Activated CD8-positive, alpha-beta memory T cell treated with anti-CD3 and anti-CD28 coated beads, Interleukin-2, amount 10 ng/mL, durations not matched to agents 7 days and 5 days (primary cell): ENCODE measurements at regions of chr4 and their contacts with region 1.

Region 1: DNA sequence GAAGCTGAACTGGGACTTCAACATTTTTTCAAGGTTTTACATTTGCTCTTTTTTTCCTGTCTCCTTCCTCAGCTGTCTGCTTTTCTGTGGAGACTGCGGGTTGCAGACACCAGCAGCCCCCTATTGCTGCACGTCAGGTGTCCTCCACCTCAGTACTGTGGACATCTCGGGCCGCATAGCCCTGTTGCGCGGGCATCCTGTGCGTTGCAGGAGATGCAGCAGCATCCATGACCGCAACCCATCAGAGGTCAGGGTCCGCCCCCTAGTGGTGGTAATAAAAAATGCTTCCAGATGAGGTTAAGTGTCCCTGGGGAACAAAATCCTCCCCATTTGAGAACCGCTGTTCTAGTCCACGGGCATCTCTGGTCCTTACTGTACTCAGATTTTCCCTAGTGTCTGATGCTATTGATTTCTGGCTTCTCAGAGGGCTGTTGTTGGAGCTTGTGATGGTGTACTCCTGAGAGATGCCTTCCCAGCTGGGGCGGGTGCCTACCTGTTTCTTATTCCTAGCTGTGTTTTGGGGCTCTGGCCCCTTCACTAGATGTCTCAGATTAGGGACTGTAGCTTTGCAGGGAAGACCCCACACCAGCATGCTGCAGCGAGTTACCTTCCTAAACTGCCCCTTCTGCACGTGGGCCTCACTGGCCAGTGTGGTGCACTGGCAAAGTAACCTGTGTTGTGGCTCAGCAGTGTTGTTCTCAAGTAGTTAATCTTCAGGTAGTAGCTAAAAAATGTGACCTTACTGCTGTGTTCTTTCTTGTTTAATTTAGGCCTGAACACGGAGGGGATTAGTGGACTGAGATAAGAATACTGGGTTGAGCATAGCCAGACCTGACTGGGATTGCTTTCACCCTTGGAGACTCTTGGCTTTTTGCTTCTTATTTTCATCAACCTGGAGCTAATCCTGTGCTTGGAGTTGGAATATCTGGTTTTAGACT is 28.2 kb downstream of the NSD2 start:
- DNase-seq: peak; percentile 86
- ATAC-seq: peak; percentile 92
- H3K4me3 Mint-ChIP-seq: no peak overlapping the region
- H3K27ac Mint-ChIP-seq: peak overlapping the region; percentile 80
- H3K4me1 Mint-ChIP-seq: peaks cover 70% of the 10 kb centered on the region
- H3K27me3 Mint-ChIP-seq: no peaks in the 10 kb centered on the region

Region 2: DNA sequence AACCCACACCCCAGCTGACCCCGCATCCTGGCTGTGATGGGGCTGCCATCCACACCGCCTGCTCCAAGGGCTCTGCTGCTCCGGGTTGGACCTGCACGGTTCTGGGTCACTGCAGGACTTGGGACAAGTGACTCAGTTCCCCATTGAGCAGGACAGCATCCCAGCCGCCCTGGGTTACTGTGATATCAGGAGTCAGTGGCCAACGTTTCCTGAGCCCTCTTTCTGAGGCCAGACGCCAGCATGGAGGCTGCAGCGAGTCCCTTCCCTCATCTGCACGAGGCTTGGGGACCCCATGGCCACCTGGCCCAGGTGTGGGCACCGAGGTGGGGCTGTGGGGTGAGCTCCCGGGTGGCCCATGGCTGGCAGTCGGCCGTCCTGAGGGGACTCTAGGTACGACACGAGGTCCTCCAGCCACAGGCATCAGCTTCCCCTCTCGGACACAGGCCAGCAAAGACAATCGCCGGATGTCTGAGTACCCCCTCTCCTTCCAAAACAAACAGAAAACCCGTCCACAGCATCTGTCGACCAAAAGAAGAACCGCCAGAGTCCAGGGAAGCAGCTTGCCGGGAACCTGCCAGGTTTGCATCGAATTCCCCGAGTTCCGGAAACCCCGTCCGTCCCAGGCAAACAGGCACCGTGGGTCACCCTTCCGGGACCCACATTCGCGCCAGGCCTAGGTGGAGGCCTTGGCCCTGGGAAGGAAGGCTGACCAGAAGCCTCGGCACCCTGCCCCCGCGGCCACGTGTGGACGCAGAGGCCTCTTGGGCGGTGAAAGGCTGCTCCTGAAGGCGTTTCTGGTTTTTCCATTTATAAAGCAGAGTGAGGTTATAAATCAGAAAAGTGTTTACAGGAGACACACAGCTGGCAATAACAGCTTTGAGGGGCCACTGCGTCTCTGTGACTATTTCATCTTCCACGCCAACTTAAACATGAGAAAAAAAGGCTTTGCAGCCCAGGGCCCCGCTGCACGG is 351.3 kb before region 1 on chr4:
- CTCF ChIA-PET with region 1: no interaction called
- DNase-seq: no peak
- ATAC-seq: no peak
- H3K4me3 Mint-ChIP-seq: no peak overlapping the region
- H3K27ac Mint-ChIP-seq: no peak overlapping the region
- H3K4me1 Mint-ChIP-seq: peaks cover 3% of the 10 kb centered on the region
- H3K27me3 Mint-ChIP-seq: peaks cover 8% of the 10 kb centered on the region

Region 3: DNA sequence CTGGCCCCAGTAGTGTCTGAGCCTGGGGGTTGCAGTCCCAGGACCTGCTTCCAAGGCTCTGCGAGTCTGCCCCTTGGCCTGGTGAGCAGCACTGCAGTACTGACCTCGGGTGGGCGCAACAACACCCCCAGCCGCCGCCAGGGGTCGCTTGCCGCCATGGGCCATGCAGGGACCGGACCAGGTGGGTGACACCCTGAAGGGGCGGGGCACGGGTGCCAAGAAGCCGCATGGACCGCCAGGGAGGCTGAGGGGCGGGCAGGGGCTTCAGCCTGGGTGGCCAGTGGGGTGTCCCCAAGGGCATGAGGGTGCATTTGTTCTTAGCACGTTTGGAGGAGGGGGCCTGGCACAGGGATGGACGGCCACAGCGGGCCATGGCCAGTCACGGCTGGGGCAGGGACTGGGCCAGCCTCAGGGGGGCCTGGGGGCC is 153.1 kb before region 1 on chr4:
- CTCF ChIA-PET with region 1: interaction called, 15 read pairs
- DNase-seq: peak; percentile 88
- ATAC-seq: peak; percentile 75
- H3K4me3 Mint-ChIP-seq: no peak overlapping the region
- H3K27ac Mint-ChIP-seq: no peak overlapping the region
- H3K4me1 Mint-ChIP-seq: no peaks in the 10 kb centered on the region
- H3K27me3 Mint-ChIP-seq: no peaks in the 10 kb centered on the region

Region 4: DNA sequence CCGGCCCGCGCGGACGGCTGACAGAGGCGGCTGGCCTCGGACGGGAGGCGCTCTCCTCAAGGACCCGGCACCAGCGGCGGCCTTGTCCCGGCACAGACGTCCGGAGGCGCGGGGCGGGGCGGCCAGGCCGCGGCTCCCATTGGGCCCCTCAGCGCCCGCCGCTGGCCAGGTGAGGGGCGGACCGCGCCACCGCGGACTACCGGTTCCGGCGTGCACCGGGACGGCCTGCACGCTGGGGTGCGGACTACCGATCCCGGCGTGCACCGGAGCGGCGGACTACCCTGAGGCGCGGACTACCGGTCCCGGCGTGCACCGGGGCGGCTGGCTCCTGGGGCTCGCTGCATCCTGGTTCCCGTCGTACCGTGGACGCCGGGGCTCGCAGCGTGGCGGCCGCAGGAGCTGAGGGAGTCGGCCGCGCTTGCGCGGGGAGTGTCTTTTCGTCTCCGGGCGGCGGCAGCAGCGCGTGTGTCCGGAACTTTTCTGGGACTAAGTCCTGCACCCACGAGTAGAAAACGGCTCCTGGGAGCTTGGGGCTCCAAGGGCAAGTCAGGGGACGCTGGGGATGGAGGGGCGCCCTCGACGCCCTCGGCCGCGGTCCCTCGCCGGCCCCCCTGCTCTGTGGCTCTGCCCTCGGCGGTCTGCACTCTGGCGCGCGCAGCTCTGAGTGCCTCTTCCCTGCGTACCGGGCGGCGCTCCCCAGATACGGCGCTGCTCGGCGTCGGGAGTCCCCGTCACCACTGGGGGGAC is 43.2 kb before region 1 on chr4 and contains the start of gene LETM1:
- CTCF ChIA-PET with region 1: interaction called, 23 read pairs
- DNase-seq: peak; percentile 97
- ATAC-seq: peak; percentile 94
- H3K4me3 Mint-ChIP-seq: peak within 1 kb of the TSS; percentile 78
- H3K27ac Mint-ChIP-seq: peak within 1 kb of the TSS; percentile 71
- H3K4me1 Mint-ChIP-seq: peaks cover 43% of the 10 kb centered on the region
- H3K27me3 Mint-ChIP-seq: no peaks in the 10 kb centered on the region
- total RNA-seq, gene LETM1: 51.1 to 73.7 TPM

Region 5: GRCh38 chr4:1862055-1862926 is 37.1 kb before region 1 on chr4:
- CTCF ChIA-PET with region 1: interaction called, 23 read pairs
- DNase-seq: peak; percentile 58
- ATAC-seq: peak; percentile 79
- H3K4me3 Mint-ChIP-seq: peak overlapping the region; percentile 72
- H3K27ac Mint-ChIP-seq: peak overlapping the region; percentile 78
- H3K4me1 Mint-ChIP-seq: peaks cover 27% of the 10 kb centered on the region
- H3K27me3 Mint-ChIP-seq: no peaks in the 10 kb centered on the region

Region 6: GRCh38 chr4:1872870-1873269 is 26.5 kb before region 1 on chr4:
- CTCF ChIA-PET with region 1: interaction called, 38 read pairs
- DNase-seq: peak; percentile 71
- ATAC-seq: peak; percentile 13
- H3K4me3 Mint-ChIP-seq: peak overlapping the region; percentile 100
- H3K27ac Mint-ChIP-seq: peak overlapping the region; percentile 99
- H3K4me1 Mint-ChIP-seq: peaks cover 51% of the 10 kb centered on the region
- H3K27me3 Mint-ChIP-seq: no peaks in the 10 kb centered on the region

Region 7: DNA sequence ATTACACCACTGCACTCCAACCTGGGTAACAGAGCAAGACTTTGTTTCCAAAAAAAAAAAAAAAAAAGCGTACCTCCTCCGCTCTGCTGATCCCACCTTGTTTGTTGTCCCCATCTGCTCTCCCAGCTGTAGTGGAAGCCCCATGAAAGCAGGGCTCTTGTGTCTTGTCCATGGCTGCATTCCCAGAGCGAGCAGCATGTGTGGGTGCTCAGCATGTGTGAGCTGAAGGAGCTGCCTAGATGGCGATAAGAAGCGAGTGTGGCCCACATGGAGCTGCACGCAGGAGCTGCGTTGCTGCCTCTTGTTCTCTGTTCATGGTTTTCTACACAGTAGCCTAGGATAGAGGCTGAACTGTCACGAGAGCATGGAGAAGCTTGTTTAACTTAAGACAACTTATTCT is 15.8 kb before region 1 on chr4:
- CTCF ChIA-PET with region 1: interaction called, 30 read pairs
- DNase-seq: no peak
- ATAC-seq: no peak
- H3K4me3 Mint-ChIP-seq: no peak overlapping the region
- H3K27ac Mint-ChIP-seq: no peak overlapping the region
- H3K4me1 Mint-ChIP-seq: peaks cover 55% of the 10 kb centered on the region
- H3K27me3 Mint-ChIP-seq: no peaks in the 10 kb centered on the region

Region 8: GRCh38 chr4:1910643-1911042 is 11.2 kb after region 1 on chr4:
- CTCF ChIA-PET with region 1: interaction called, 48 read pairs
- DNase-seq: no peak
- ATAC-seq: no peak
- H3K4me3 Mint-ChIP-seq: no peak overlapping the region
- H3K27ac Mint-ChIP-seq: peak overlapping the region; percentile 44
- H3K4me1 Mint-ChIP-seq: peaks cover 44% of the 10 kb centered on the region
- H3K27me3 Mint-ChIP-seq: no peaks in the 10 kb centered on the region